ENCODE measurements at regions of chr2 and their contacts with region 1.

Region 1: GRCh38 chr2:179031731-179032408 is 18.1 kb downstream of the CCDC141 start:
- DNase-seq: peak in 2 of 5 donors; percentile 30 to 64
- H3K4me3 ChIP-seq: peak overlapping the region; percentile 40
- H3K4me3 Mint-ChIP-seq: peak overlapping the region; percentile 70 to 89 (median 76)
- H3K27ac ChIP-seq: peak overlapping the region; percentile 7
- H3K27ac Mint-ChIP-seq: peak overlapping the region; percentile 68 to 91 (median 87)
- H3K4me1 ChIP-seq: peaks cover 18% of the 10 kb centered on the region
- H3K4me1 Mint-ChIP-seq: peaks cover 19 to 27% (median 21%) of the 10 kb centered on the region in 3 donors
- H3K27me3 ChIP-seq: no peaks in the 10 kb centered on the region
- H3K27me3 Mint-ChIP-seq: no peaks in the 10 kb centered on the region

Region 2: DNA sequence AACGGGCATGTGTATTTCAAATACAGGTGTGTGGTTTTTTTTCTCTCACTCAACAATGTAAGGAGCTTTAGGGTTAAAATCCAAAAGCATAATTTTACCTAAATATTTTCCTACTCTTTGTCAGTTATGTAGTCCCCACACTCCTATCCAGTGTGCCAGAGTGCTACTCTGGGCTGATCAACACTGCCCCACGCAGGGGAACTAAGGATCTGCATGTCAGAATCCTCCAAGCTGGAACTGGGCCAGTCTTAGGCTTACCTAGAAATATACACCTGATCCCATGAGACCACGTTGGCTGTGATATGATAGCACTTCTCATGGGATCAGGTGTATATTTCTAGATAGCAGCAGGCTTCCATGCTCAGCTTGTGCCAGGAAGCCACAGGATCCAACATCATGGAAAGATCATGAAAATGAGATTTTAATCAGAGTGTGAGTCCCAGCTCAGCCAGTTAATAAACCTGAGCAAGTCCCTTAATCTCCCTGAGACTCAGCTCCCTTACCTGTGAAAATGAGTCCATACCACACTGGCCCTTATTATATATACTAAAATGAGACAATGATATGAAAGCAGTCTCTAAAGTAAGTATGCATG is 11.6 kb before region 1 on chr2:
- CTCF ChIA-PET with region 1: interaction called, 12 read pairs
- POLR2A ChIA-PET with region 1: no interaction called
- DNase-seq: peak in 2 of 5 donors; percentile 28 to 55
- H3K4me3 ChIP-seq: no peak overlapping the region
- H3K4me3 Mint-ChIP-seq: no peak overlapping the region
- H3K27ac ChIP-seq: no peak overlapping the region
- H3K27ac Mint-ChIP-seq: no peak overlapping the region
- H3K4me1 ChIP-seq: no peaks in the 10 kb centered on the region
- H3K4me1 Mint-ChIP-seq: peaks cover 18 to 24% (median 19%) of the 10 kb centered on the region in 3 donors
- H3K27me3 ChIP-seq: no peaks in the 10 kb centered on the region
- H3K27me3 Mint-ChIP-seq: no peaks in the 10 kb centered on the region

Region 3: DNA sequence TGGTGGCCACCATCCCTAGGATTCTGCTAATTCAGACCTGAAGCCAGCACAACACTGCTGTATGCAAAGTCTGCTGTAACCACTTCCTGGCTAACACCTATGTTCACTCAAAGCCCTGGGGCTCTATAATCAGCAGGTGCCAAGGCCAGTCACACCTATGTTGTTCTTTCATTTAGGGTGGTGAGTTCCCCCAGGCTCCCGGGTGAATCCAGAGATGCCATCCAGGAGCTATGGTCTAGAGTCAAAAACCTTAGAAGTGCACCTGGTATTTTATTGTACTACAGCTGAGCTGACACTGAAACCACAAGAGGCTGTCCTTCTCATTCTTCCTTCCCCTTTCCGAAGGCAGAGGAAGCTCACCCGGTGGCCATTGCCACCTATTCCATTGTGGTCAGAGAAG is 64.2 kb after region 1 on chr2:
- CTCF ChIA-PET with region 1: no interaction called
- POLR2A ChIA-PET with region 1: no interaction called
- DNase-seq: peak in 3 of 5 donors; percentile 20 to 46 (median 27)
- H3K4me3 ChIP-seq: no peak overlapping the region
- H3K4me3 Mint-ChIP-seq: peak overlapping the region in 2 of 7 donors; percentile 20 to 29
- H3K27ac ChIP-seq: no peak overlapping the region
- H3K27ac Mint-ChIP-seq: peak overlapping the region in 1 of 8 donors; percentile 85
- H3K4me1 ChIP-seq: peaks cover 11% of the 10 kb centered on the region
- H3K4me1 Mint-ChIP-seq: peaks cover 10 to 18% (median 14%) of the 10 kb centered on the region in 3 donors
- H3K27me3 ChIP-seq: no peaks in the 10 kb centered on the region
- H3K27me3 Mint-ChIP-seq: no peaks in the 10 kb centered on the region

Measured in CD8-positive, alpha-beta memory T cell (primary cell).